SK-N-SH (cell line): ENCODE measurements at regions of chr5 and their contacts with region 1.

Region 1: DNA sequence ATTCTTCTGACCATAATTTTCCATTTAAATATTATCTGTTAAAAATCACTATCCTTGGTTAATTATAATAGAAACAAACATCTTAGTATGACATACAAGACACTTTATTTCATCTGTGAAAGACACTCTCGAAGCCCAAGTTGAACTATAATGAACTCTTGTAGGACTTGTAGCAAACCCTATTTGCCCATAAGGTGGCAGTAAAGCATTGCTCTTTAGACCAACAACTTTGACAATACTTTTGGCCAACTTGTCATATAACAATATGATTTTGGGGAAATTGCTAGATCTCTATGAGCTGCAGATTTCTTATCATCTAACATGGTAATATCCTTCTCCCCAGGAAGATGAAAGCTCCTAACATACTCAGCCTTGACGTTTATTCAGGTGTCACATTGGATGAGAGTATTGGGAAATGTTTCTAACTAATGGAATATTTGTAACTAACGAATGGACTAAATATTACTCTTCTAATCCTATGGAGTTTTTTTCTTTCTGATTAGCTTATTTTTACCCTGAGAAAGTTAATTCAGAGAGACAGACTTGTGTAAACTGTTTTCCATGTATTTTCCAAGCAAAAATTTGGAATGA is 11.0 kb downstream of the SPINK14 start:
- DNase-seq: peak; percentile 12
- H3K4me3 ChIP-seq: no peak overlapping the region
- H3K27ac ChIP-seq: no peak overlapping the region
- H3K4me1 ChIP-seq: no peaks in the 10 kb centered on the region
- H3K27me3 ChIP-seq: no peaks in the 10 kb centered on the region
- CTCF ChIP-seq: peak; percentile 82
- EP300 ChIP-seq: no peak
- RAD21 ChIP-seq: peak; percentile 91

Region 2: DNA sequence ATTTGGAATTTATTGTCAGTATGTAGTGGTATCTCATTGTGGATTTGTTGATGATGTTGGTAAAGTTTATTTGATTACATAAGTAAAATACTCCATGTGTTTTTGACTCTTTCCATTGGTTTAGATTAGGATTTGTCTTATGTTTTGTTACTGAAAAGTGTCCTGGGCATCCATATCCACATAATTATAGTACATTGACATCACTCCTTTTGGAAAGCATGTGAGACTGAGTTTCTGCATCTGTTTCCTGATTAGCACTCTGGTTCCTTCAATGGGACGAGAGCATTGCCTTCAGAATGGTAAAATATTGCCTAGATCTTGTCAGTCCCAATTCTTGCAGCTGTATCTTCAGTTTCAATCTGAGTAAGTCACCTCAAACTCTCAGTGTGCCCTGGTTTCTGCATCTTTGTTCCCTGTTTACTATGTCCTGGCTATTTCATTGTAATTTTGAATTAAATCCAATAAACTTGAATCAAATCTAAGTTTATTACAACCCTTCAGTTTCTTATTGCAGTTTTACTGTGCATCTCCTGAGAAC is 332.6 kb after region 1 on chr5:
- CTCF ChIA-PET with region 1: no interaction called
- POLR2A ChIA-PET with region 1: no interaction called
- DNase-seq: no peak
- H3K4me3 ChIP-seq: no peak overlapping the region
- H3K27ac ChIP-seq: no peak overlapping the region
- H3K4me1 ChIP-seq: no peaks in the 10 kb centered on the region
- H3K27me3 ChIP-seq: no peaks in the 10 kb centered on the region
- CTCF ChIP-seq: no peak
- EP300 ChIP-seq: no peak
- RAD21 ChIP-seq: no peak

Region 3: GRCh38 chr5:148725677-148726076 is 546.3 kb after region 1 on chr5:
- CTCF ChIA-PET with region 1: interaction called, 45 read pairs
- POLR2A ChIA-PET with region 1: no interaction called
- DNase-seq: no peak
- H3K4me3 ChIP-seq: no peak overlapping the region
- H3K27ac ChIP-seq: no peak overlapping the region
- H3K4me1 ChIP-seq: peaks cover 0 to 3% of the 10 kb centered on the region in 2 experiments; a peak in 1 of 4 replicates
- H3K27me3 ChIP-seq: no peaks in the 10 kb centered on the region; the same call in 1 of the 2 replicates
- CTCF ChIP-seq: no peak
- EP300 ChIP-seq: no peak
- RAD21 ChIP-seq: no peak